CD4-positive, alpha-beta memory T cell (primary cell): ENCODE measurements at regions of chr1 and their contacts with region 1.

Region 1: DNA sequence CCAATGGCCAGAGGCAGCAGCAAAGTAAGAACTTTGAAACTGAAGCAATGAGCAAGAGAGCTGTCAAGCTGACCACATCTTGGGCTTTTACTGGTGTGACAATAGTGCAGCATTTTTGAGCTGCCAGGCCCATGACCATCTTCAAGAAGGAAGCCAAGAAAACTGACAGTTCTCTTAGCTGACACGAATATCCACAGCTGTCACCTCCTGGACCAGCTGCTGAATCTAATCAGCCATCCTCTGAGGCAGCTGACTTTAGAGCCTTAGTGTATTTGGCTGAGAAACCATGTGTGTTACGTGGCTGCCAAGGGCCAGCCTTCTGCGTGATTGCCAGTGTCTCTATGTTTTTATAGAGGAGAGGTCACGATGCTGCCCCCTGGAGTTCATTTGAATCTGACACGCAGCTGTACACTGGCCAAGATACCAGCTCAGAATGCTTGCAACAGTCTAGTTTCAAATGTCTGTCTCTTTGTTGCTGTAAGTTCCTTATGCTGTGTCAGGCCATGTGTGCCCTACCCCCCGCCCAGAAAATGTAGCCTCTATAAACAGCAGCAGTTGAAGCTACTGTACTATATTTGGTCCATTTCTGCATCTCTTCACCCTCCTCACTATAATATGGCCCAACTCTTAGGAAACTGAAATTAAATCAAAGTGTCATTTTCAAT is 39.7 kb downstream of the PALMD start:
- DNase-seq: peak in 4 of 5 donors; percentile 13 to 21 (median 16)
- H3K4me3 ChIP-seq: no peak overlapping the region
- H3K4me3 Mint-ChIP-seq: no peak overlapping the region
- H3K27ac ChIP-seq: no peak overlapping the region
- H3K27ac Mint-ChIP-seq: no peak overlapping the region
- H3K4me1 ChIP-seq: no peaks in the 10 kb centered on the region
- H3K4me1 Mint-ChIP-seq: peaks cover 0 to 2% (median under 1%) of the 10 kb centered on the region in 4 donors
- H3K27me3 ChIP-seq: no peaks in the 10 kb centered on the region
- H3K27me3 Mint-ChIP-seq: peaks cover 4 to 6% of the 10 kb centered on the region in 2 donors

Region 2: GRCh38 chr1:99180343-99180808 is 505.3 kb before region 1 on chr1:
- CTCF ChIA-PET with region 1: interaction called, 9 read pairs
- POLR2A ChIA-PET with region 1: no interaction called
- intact Hi-C with region 1: loop called (anchors 1 kb)
- DNase-seq: peak; percentile 49 to 63 (median 55)
- H3K4me3 ChIP-seq: no peak overlapping the region
- H3K4me3 Mint-ChIP-seq: no peak overlapping the region
- H3K27ac ChIP-seq: no peak overlapping the region
- H3K27ac Mint-ChIP-seq: no peak overlapping the region
- H3K4me1 ChIP-seq: no peaks in the 10 kb centered on the region
- H3K4me1 Mint-ChIP-seq: no peaks in the 10 kb centered on the region
- H3K27me3 ChIP-seq: no peaks in the 10 kb centered on the region
- H3K27me3 Mint-ChIP-seq: peaks cover 1 to 3% of the 10 kb centered on the region in 2 donors

Region 3: DNA sequence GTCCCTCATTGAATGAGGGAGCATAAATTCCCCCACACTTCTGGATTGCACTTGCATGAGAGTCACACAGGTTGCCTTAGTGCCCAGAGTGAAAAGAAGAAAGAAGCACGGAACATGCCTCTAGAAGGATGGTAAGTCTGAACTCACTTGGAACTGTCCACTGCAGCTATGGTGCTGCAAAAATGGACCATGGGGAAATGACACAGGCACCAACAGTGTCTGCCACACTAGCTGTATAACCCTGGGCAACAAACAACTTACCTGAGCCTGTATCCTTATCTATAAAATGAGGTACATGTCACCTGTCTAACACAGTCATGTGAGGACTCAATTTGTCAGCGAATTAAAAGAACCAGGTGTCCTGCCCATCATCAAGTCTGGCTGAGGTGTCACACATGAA is 11.0 kb after region 1 on chr1:
- CTCF ChIA-PET with region 1: interaction called, 12 read pairs
- POLR2A ChIA-PET with region 1: no interaction called
- intact Hi-C with region 1: no loop called
- DNase-seq: no peak
- H3K4me3 ChIP-seq: no peak overlapping the region
- H3K4me3 Mint-ChIP-seq: no peak overlapping the region
- H3K27ac ChIP-seq: no peak overlapping the region
- H3K27ac Mint-ChIP-seq: no peak overlapping the region
- H3K4me1 ChIP-seq: no peaks in the 10 kb centered on the region
- H3K4me1 Mint-ChIP-seq: no peaks in the 10 kb centered on the region
- H3K27me3 ChIP-seq: no peaks in the 10 kb centered on the region
- H3K27me3 Mint-ChIP-seq: peaks cover 24 to 29% of the 10 kb centered on the region in 2 donors

Region 4: GRCh38 chr1:99707535-99708142 is 22.0 kb after region 1 on chr1:
- CTCF ChIA-PET with region 1: interaction called, 13 read pairs
- POLR2A ChIA-PET with region 1: no interaction called
- intact Hi-C with region 1: no loop called
- DNase-seq: peak in 4 of 5 donors; percentile 31 to 43 (median 40)
- H3K4me3 ChIP-seq: no peak overlapping the region
- H3K4me3 Mint-ChIP-seq: no peak overlapping the region
- H3K27ac ChIP-seq: no peak overlapping the region
- H3K27ac Mint-ChIP-seq: no peak overlapping the region
- H3K4me1 ChIP-seq: peaks cover 21% of the 10 kb centered on the region
- H3K4me1 Mint-ChIP-seq: peaks cover 14 to 29% (median 15%) of the 10 kb centered on the region in 4 donors
- H3K27me3 ChIP-seq: no peaks in the 10 kb centered on the region
- H3K27me3 Mint-ChIP-seq: no peaks in the 10 kb centered on the region

Region 5: DNA sequence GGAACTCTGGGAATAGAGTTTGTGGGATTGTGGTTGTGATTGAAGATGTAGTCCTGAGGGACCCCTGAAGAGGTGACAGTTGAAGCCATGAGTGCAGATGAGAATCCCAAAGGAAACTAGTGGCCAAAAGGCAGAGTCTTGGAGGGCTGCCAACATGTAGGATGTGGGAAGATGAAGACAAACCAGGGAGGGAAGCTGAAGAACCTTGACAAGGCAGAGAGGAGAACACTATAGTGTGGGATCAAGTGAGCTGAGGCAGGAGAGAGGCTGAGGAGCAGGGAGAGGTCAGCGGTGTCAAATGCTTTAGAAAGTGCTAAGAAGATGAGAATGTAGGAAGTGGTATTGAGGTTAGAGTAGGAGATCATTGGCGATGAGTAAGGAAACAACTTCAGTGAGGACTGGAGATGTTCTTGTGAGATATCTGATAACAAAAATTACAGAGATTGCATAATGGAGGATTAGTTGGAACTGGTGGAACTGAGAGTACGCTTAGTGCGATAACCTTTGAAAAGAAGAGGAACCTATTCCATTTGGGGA is 945.4 kb after region 1 on chr1:
- CTCF ChIA-PET with region 1: no interaction called
- POLR2A ChIA-PET with region 1: no interaction called
- intact Hi-C with region 1: no loop called
- DNase-seq: no peak
- H3K4me3 ChIP-seq: no peak overlapping the region
- H3K4me3 Mint-ChIP-seq: no peak overlapping the region
- H3K27ac ChIP-seq: no peak overlapping the region
- H3K27ac Mint-ChIP-seq: peak overlapping the region in 1 of 7 donors; percentile 4
- H3K4me1 ChIP-seq: no peaks in the 10 kb centered on the region
- H3K4me1 Mint-ChIP-seq: peaks cover 0 to 5% (median 1%) of the 10 kb centered on the region in 4 donors
- H3K27me3 ChIP-seq: no peaks in the 10 kb centered on the region
- H3K27me3 Mint-ChIP-seq: peaks cover under 1 to 7% of the 10 kb centered on the region in 2 donors